Body of pancreas (tissue), 4 donors: ENCODE measurements at regions of chr17 and their contacts with region 1.

Region 1: GRCh38 chr17:73255671-73256181 is 6.0 kb downstream of the CPSF4L start:
- DNase-seq: peak; percentile 42 to 64 (median 56)
- ATAC-seq: peak; percentile 77
- H3K4me3 ChIP-seq: no peak overlapping the region
- H3K27ac ChIP-seq: no peak overlapping the region
- H3K4me1 ChIP-seq: peaks cover under 1% of the 10 kb centered on the region
- H3K27me3 ChIP-seq: no peaks in the 10 kb centered on the region
- CTCF ChIP-seq: peak; percentile 91 to 99 (median 95)
- POLR2A ChIP-seq: no peak

Region 2: DNA sequence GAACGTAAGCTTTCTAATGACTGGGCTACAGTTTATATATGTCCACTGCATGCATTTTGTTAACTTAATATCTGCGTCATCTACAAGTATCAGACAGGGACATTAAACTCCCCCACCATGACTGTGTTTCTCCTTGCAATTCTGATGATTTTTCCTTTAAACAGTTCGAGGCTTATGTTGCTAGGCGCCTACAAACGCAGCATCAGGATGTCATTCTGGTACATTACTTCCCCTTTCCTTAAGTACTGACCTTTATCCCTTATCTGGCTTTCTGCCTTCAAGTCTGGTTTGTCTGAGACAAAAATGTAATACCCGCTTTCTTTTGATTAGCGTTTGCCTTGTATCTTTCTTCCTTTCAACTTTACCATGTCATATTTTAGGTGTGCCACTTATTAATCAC is 525.6 kb before region 1 on chr17:
- intact Hi-C with region 1: loop called (anchors 10 kb)
- DNase-seq: no peak
- ATAC-seq: no peak
- H3K4me3 ChIP-seq: no peak overlapping the region
- H3K27ac ChIP-seq: no peak overlapping the region
- H3K4me1 ChIP-seq: no peaks in the 10 kb centered on the region
- H3K27me3 ChIP-seq: no peaks in the 10 kb centered on the region
- CTCF ChIP-seq: no peak
- POLR2A ChIP-seq: no peak

Region 3: GRCh38 chr17:73311781-73312641 is 56.3 kb after region 1 on chr17 and contains the start of gene CDC42EP4:
- intact Hi-C with region 1: loop called (anchors 10 kb)
- DNase-seq: peak; percentile 96 to 97 (median 97)
- ATAC-seq: peak; percentile 75
- H3K4me3 ChIP-seq: peak within 1 kb of the TSS; percentile 74 to 91
- H3K27ac ChIP-seq: peak within 1 kb of the TSS; percentile 96 to 99 (median 96)
- H3K4me1 ChIP-seq: peaks cover 37% of the 10 kb centered on the region
- H3K27me3 ChIP-seq: no peaks in the 10 kb centered on the region
- CTCF ChIP-seq: peak in 1 of 7 experiments; percentile 9
- POLR2A ChIP-seq: peak; percentile 99
- total RNA-seq, gene CDC42EP4: 47.0 to 60.6 TPM

Region 4: GRCh38 chr17:73325527-73325842 is 69.8 kb after region 1 on chr17:
- intact Hi-C with region 1: no loop called
- DNase-seq: peak in 1 of 4 donors; percentile 35
- ATAC-seq: peak; percentile 60
- H3K4me3 ChIP-seq: no peak overlapping the region
- H3K27ac ChIP-seq: peak overlapping the region in 1 of 4 donors; percentile 11
- H3K4me1 ChIP-seq: no peaks in the 10 kb centered on the region
- H3K27me3 ChIP-seq: no peaks in the 10 kb centered on the region
- CTCF ChIP-seq: no peak
- POLR2A ChIP-seq: no peak

Region 5: GRCh38 chr17:73342050-73342522 is 86.4 kb after region 1 on chr17:
- intact Hi-C with region 1: no loop called
- DNase-seq: peak; percentile 60 to 76 (median 71)
- ATAC-seq: peak; percentile 85
- H3K4me3 ChIP-seq: no peak overlapping the region
- H3K27ac ChIP-seq: peak overlapping the region; percentile 21 to 65 (median 44)
- H3K4me1 ChIP-seq: peaks cover 23% of the 10 kb centered on the region
- H3K27me3 ChIP-seq: no peaks in the 10 kb centered on the region
- CTCF ChIP-seq: no peak
- POLR2A ChIP-seq: no peak

Region 6: GRCh38 chr17:73371836-73372235 is 116.1 kb after region 1 on chr17:
- intact Hi-C with region 1: loop called (anchors 2 kb)
- DNase-seq: no peak
- ATAC-seq: no peak
- H3K4me3 ChIP-seq: no peak overlapping the region
- H3K27ac ChIP-seq: no peak overlapping the region
- H3K4me1 ChIP-seq: peaks cover 12% of the 10 kb centered on the region
- H3K27me3 ChIP-seq: no peaks in the 10 kb centered on the region
- CTCF ChIP-seq: no peak
- POLR2A ChIP-seq: no peak

Region 7: GRCh38 chr17:73956669-73957465 is 701.1 kb after region 1 on chr17:
- intact Hi-C with region 1: no loop called
- DNase-seq: peak; percentile 69 to 89 (median 70)
- ATAC-seq: peak; percentile 64
- H3K4me3 ChIP-seq: no peak overlapping the region
- H3K27ac ChIP-seq: no peak overlapping the region
- H3K4me1 ChIP-seq: peaks cover 10% of the 10 kb centered on the region
- H3K27me3 ChIP-seq: peaks cover 0 to 4% of the 10 kb centered on the region in 2 donors
- CTCF ChIP-seq: peak in 6 of 7 experiments; percentile 36 to 75 (median 50)
- POLR2A ChIP-seq: no peak